CD4-positive, alpha-beta memory T cell (primary cell): ENCODE measurements at regions of chr1 and their contacts with region 1.

Region 1: DNA sequence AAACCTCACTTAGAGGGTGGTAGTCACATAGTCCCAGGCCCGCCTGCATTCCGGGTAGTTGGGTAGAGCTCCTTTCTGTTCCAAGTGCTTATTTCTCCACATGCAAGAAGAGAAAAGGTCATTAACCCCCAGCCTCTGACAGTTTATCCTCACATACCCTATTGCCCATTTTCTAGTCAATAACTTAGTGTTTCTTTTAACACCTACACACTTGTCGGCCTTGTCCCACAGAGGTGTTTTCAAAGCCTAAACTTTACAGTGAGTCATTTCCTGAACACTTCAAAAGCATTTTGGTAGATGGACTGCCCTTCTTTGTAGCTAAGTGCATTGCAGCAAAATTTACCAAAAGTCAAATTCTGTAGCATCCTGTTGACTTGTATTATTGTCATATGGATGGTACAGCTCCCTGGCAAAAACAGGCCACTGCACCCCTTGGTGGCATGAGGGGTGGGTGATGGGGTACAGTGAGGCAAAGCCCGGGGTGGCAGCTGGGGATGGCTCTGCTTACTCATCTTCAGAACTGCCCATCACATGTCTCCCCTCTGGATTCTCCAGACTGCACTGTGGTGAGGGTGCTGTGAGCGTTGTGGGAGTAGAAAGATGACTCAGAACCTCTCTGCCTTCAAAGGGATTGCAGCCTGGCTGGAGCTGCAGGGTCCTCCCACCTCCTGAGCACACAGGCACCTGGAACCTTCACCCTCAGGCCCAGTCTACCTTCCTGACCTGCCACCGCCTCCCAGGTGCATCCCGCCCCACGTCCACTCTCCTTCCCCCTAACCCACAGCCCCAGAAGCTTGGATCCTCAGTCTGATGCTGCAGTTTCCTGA is 45.8 kb upstream of the DMRTB1 start:
- DNase-seq: peak; percentile 63 to 86 (median 69)
- H3K4me3 ChIP-seq: peak overlapping the region in 1 of 2 donors; percentile 3
- H3K4me3 Mint-ChIP-seq: peak overlapping the region; percentile 11 to 78 (median 65)
- H3K27ac ChIP-seq: peak overlapping the region; percentile 63
- H3K27ac Mint-ChIP-seq: peak overlapping the region; percentile 91 to 99 (median 98)
- H3K4me1 ChIP-seq: peaks cover 79% of the 10 kb centered on the region
- H3K4me1 Mint-ChIP-seq: peaks cover 38 to 78% (median 59%) of the 10 kb centered on the region in 4 donors
- H3K27me3 ChIP-seq: no peaks in the 10 kb centered on the region
- H3K27me3 Mint-ChIP-seq: no peaks in the 10 kb centered on the region

Region 2: GRCh38 chr1:53190210-53190611 is 223.2 kb before region 1 on chr1:
- CTCF ChIA-PET with region 1: no interaction called
- POLR2A ChIA-PET with region 1: no interaction called
- intact Hi-C with region 1: no loop called
- DNase-seq: no peak
- H3K4me3 ChIP-seq: no peak overlapping the region
- H3K4me3 Mint-ChIP-seq: no peak overlapping the region
- H3K27ac ChIP-seq: no peak overlapping the region
- H3K27ac Mint-ChIP-seq: no peak overlapping the region
- H3K4me1 ChIP-seq: no peaks in the 10 kb centered on the region
- H3K4me1 Mint-ChIP-seq: no peaks in the 10 kb centered on the region
- H3K27me3 ChIP-seq: no peaks in the 10 kb centered on the region
- H3K27me3 Mint-ChIP-seq: no peaks in the 10 kb centered on the region

Region 3: DNA sequence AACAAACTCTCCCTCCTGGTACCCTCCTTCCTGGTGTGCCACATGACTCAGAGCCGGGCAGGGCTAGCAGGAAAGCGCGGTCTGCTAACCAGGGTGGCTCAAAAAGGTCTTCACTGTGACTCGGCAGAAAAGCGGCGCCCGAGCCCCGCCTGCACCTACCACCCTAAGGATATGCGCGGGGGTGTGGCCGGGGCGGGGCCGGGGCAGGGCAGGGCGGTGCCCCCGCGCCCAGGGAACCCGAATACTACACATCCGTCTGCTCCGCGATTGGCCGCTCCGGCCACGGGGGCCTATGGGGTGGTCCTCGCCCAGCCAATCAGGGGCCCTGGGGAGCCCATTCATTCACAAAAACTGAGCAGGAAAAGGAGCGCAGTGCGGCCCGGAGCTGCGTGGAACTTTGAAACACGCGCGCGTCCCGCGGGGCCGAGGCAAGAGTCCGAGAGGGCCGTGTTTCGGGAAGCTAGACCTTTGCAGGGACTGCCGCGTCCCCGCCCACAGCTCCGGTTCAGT is 87.2 kb before region 1 on chr1:
- CTCF ChIA-PET with region 1: interaction called, 4 read pairs
- POLR2A ChIA-PET with region 1: interaction called, 24 read pairs
- intact Hi-C with region 1: loop called (anchors 1 kb)
- DNase-seq: peak; percentile 86 to 92 (median 87)
- H3K4me3 ChIP-seq: peak overlapping the region; percentile 78 to 82
- H3K4me3 Mint-ChIP-seq: peak overlapping the region; percentile 88 to 98 (median 93)
- H3K27ac ChIP-seq: peak overlapping the region; percentile 60
- H3K27ac Mint-ChIP-seq: peak overlapping the region; percentile 84 to 94 (median 89)
- H3K4me1 ChIP-seq: peaks cover 12% of the 10 kb centered on the region
- H3K4me1 Mint-ChIP-seq: peaks cover 11 to 30% (median 19%) of the 10 kb centered on the region in 4 donors
- H3K27me3 ChIP-seq: no peaks in the 10 kb centered on the region
- H3K27me3 Mint-ChIP-seq: no peaks in the 10 kb centered on the region

Region 4: GRCh38 chr1:53375440-53375839 is 37.9 kb before region 1 on chr1:
- CTCF ChIA-PET with region 1: no interaction called
- POLR2A ChIA-PET with region 1: no interaction called
- intact Hi-C with region 1: no loop called
- DNase-seq: no peak
- H3K4me3 ChIP-seq: no peak overlapping the region
- H3K4me3 Mint-ChIP-seq: no peak overlapping the region
- H3K27ac ChIP-seq: no peak overlapping the region
- H3K27ac Mint-ChIP-seq: no peak overlapping the region
- H3K4me1 ChIP-seq: no peaks in the 10 kb centered on the region
- H3K4me1 Mint-ChIP-seq: peaks cover 0 to 2% (median 0%) of the 10 kb centered on the region in 4 donors
- H3K27me3 ChIP-seq: no peaks in the 10 kb centered on the region
- H3K27me3 Mint-ChIP-seq: peaks cover 1 to 2% of the 10 kb centered on the region in 2 donors

Region 5: DNA sequence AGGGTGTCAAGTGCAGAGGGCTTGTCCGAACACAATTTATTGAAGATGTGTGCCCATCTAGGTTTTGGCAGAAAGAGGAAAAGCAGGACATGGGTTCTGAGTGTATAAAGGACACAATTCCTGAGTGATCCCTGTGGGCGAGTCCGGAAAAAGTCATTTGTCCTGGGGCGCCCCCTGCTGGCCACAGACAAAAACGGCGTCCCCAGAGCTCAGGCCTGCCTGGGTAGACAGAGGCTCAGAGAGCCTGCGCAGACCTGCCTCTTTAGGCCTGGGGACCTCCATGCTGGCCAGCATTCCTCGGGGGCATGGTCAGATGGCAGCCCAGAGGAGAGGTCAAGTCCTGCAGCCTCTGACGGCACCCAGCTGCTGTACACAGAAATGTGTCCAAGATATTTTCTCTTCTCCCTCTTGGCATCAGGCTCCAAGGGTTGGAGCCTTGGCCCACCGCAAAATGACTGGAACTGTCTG is 20.0 kb before region 1 on chr1:
- CTCF ChIA-PET with region 1: interaction called, 35 read pairs
- POLR2A ChIA-PET with region 1: interaction called, 9 read pairs
- intact Hi-C with region 1: no loop called
- DNase-seq: peak; percentile 49 to 71 (median 52)
- H3K4me3 ChIP-seq: no peak overlapping the region
- H3K4me3 Mint-ChIP-seq: peak overlapping the region in 1 of 8 donors; percentile 31
- H3K27ac ChIP-seq: no peak overlapping the region
- H3K27ac Mint-ChIP-seq: peak overlapping the region in 3 of 7 donors; percentile 13 to 29 (median 23)
- H3K4me1 ChIP-seq: peaks cover 5% of the 10 kb centered on the region
- H3K4me1 Mint-ChIP-seq: peaks cover 0 to 8% (median 2%) of the 10 kb centered on the region in 4 donors
- H3K27me3 ChIP-seq: no peaks in the 10 kb centered on the region
- H3K27me3 Mint-ChIP-seq: no peaks in the 10 kb centered on the region

Region 6: DNA sequence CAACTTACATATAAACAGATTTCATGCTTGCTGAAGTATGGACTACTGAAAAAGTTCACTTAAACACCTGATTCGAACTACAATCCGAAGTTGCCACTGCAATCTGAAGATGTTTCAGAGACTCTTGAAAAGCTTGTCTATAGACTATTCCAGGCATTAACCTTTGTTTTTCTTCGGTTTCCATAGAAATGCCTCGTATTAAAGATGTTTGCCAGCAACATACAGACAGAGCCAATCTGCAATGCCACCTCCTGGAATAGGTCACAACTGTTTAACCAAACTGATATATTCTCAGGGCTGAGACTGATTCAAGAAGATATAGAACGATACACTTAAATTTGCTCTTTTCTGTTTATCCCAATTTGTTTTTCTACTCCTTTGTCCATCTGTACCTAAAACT is 16.9 kb after region 1 on chr1:
- CTCF ChIA-PET with region 1: interaction called, 3 read pairs
- POLR2A ChIA-PET with region 1: interaction called, 19 read pairs
- intact Hi-C with region 1: loop called (anchors 2 kb)
- DNase-seq: no peak
- H3K4me3 ChIP-seq: no peak overlapping the region
- H3K4me3 Mint-ChIP-seq: no peak overlapping the region
- H3K27ac ChIP-seq: no peak overlapping the region
- H3K27ac Mint-ChIP-seq: no peak overlapping the region
- H3K4me1 ChIP-seq: peaks cover 18% of the 10 kb centered on the region
- H3K4me1 Mint-ChIP-seq: peaks cover 14 to 40% (median 22%) of the 10 kb centered on the region in 4 donors
- H3K27me3 ChIP-seq: no peaks in the 10 kb centered on the region
- H3K27me3 Mint-ChIP-seq: peaks cover 3% of the 10 kb centered on the region in 2 donors

Region 7: GRCh38 chr1:53482466-53483181 is 69.2 kb after region 1 on chr1:
- CTCF ChIA-PET with region 1: no interaction called
- POLR2A ChIA-PET with region 1: no interaction called
- intact Hi-C with region 1: no loop called
- DNase-seq: no peak
- H3K4me3 ChIP-seq: no peak overlapping the region
- H3K4me3 Mint-ChIP-seq: no peak overlapping the region
- H3K27ac ChIP-seq: no peak overlapping the region
- H3K27ac Mint-ChIP-seq: peak overlapping the region in 1 of 7 donors; percentile 24
- H3K4me1 ChIP-seq: no peaks in the 10 kb centered on the region
- H3K4me1 Mint-ChIP-seq: peaks cover 0 to 10% (median 5%) of the 10 kb centered on the region in 4 donors
- H3K27me3 ChIP-seq: no peaks in the 10 kb centered on the region
- H3K27me3 Mint-ChIP-seq: peaks cover 9 to 12% of the 10 kb centered on the region in 2 donors